IMR-90 (cell line): ENCODE measurements at regions of chr1 and their contacts with region 1.

Region 1: DNA sequence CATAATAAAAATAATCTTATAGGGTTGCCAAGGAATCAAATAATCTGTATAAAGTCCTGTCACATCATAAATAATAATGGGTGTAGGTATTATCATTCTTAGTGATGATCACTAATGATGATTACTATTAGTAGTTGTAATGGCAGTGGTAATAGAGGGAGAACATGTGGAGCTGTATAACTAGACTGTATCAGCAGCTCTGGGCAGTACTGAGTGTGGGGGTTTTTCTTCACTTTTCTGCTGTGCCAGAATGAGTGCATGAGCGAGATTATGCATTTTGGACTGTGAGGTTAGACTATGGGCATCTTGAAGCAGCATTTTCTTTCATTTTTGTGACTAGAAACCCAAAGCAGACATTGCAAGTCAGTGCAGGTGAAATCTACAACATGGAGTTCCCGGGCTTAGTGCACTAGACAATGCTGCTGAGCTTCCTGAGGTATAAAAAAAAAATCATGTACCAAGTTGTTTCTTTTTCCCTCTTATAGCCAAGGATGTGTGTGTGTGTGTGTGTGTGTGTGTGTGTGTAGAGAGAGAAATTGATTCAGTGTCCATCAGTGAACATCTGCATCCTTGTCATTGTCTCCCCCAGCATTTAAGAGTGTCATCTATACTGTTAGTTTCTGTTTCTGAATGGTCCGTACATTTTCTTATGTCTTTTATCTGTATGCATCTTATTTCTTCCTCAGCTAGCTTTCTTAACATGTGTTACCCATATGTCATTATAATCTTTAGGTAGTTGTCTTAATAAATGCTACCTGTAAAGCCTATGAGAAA is 86.6 kb downstream of the GIPC2 start:
- DNase-seq: no peak
- ATAC-seq: no peak
- H3K4me3 ChIP-seq: no peak overlapping the region
- H3K27ac ChIP-seq: no peak overlapping the region
- H3K4me1 ChIP-seq: no peaks in the 10 kb centered on the region
- H3K27me3 ChIP-seq: no peaks in the 10 kb centered on the region
- CTCF ChIP-seq: no peak
- POLR2A ChIP-seq: no peak
- RAD21 ChIP-seq: no peak

Region 2: GRCh38 chr1:78664763-78665162 is 532.4 kb after region 1 on chr1:
- CTCF ChIA-PET with region 1: no interaction called
- POLR2A ChIA-PET with region 1: no interaction called
- dilution Hi-C with region 1: no loop called
- in situ Hi-C with region 1: loop called (anchors 5 kb)
- intact Hi-C with region 1: no loop called
- DNase-seq: peak; percentile 9
- ATAC-seq: no peak
- H3K4me3 ChIP-seq: no peak overlapping the region
- H3K27ac ChIP-seq: no peak overlapping the region
- H3K4me1 ChIP-seq: no peaks in the 10 kb centered on the region
- H3K27me3 ChIP-seq: no peaks in the 10 kb centered on the region
- CTCF ChIP-seq: no peak
- POLR2A ChIP-seq: no peak
- RAD21 ChIP-seq: no peak